ENCODE measurements at regions of chr14 and their contacts with region 1.

Region 1: DNA sequence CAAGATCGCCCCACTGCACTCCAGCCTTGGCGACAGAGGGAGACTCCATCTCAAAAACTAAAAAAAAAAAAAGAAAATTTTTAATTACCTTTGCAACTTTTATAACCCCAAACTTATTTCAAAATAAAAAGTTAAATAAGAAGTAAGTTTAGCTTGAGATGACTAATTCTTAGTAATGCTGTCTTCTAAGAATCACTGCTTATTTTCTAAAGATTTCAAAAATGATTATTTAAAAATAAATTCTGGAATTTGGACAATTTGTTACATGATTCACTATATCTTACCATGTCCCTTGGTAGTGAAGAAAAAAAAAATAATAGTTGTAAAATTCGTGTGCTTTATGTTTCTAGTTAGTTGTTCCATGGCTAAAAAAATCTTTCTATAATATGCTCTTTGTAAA is 11.6 kb upstream of the HECTD1 start:
- DNase-seq: no peak
- H3K4me3 ChIP-seq: no peak overlapping the region
- H3K27ac ChIP-seq: no peak overlapping the region
- H3K4me1 ChIP-seq: no peaks in the 10 kb centered on the region
- H3K27me3 ChIP-seq: no peaks in the 10 kb centered on the region
- CTCF ChIP-seq: no peak

Region 2: GRCh38 chr14:31263485-31264133 is 44.4 kb after region 1 on chr14:
- intact Hi-C with region 1: loop called (anchors 10 kb)
- DNase-seq: no peak
- H3K4me3 ChIP-seq: no peak overlapping the region
- H3K27ac ChIP-seq: no peak overlapping the region
- H3K4me1 ChIP-seq: no peaks in the 10 kb centered on the region
- H3K27me3 ChIP-seq: no peaks in the 10 kb centered on the region
- CTCF ChIP-seq: no peak

Measured in colonic mucosa (tissue), 4 donors.